ENCODE measurements at regions of chr3 and their contacts with region 1.

Region 1: DNA sequence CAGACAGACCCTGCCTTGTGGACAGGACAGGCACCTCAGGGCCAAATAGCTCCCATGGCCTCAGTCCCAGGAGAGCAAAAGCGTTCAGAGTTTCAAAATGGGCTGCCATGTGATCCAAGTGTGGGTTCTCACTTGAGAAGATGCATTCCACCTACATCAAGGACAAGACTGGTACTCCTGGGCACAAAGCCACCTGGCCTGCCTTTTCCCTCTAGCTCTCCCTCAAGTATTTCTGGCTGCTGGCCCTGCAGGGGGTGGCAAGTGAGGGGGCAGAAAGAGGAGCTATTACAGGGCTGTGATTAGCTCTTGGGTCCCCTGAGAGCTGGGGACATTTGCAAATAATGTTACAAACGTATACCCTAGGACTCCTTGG is 6.5 kb upstream of the COL7A1 start:
- DNase-seq: peak in 6 of 10 donors; percentile 31 to 84 (median 70)
- H3K4me3 ChIP-seq: no peak overlapping the region
- H3K27ac ChIP-seq: no peak overlapping the region
- H3K27me3 ChIP-seq: no peaks in the 10 kb centered on the region
- CTCF ChIP-seq: no peak

Region 2: DNA sequence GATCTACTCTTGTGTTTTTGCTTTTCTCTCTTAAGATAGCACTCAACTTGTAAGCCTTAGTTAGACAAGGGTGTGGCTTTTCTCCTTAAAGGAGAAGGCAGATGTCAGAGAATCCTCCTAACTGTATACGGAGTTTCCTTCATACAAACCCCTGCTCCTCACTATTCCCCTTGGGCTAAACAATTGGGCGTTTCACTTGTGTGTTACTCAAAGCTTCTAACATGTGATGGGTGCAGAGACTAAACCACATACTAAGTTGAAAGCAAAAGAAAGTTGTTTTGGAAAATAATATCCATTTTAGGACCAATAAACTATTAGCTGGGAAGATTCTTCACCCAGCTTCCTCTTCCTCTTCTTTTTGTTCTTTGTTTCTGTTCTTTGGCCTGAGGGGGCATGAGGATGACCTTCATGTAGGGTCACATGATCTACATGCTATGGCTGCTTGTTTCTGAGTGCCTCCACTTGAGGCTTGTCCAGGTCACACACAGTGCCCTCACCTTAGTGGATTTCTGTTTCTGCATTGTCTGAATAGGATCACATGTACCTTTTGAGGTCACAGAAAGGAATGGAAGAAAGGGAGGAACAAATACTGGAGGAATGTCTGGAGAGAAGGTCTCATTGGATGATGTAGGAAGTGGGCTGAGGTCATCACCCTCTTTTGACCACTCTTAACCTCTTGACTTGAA is 282.7 kb before region 1 on chr3:
- intact Hi-C with region 1: no loop called
- DNase-seq: no peak
- H3K4me3 ChIP-seq: no peak overlapping the region
- H3K27ac ChIP-seq: no peak overlapping the region
- H3K27me3 ChIP-seq: no peaks in the 10 kb centered on the region
- CTCF ChIP-seq: no peak

Region 3: DNA sequence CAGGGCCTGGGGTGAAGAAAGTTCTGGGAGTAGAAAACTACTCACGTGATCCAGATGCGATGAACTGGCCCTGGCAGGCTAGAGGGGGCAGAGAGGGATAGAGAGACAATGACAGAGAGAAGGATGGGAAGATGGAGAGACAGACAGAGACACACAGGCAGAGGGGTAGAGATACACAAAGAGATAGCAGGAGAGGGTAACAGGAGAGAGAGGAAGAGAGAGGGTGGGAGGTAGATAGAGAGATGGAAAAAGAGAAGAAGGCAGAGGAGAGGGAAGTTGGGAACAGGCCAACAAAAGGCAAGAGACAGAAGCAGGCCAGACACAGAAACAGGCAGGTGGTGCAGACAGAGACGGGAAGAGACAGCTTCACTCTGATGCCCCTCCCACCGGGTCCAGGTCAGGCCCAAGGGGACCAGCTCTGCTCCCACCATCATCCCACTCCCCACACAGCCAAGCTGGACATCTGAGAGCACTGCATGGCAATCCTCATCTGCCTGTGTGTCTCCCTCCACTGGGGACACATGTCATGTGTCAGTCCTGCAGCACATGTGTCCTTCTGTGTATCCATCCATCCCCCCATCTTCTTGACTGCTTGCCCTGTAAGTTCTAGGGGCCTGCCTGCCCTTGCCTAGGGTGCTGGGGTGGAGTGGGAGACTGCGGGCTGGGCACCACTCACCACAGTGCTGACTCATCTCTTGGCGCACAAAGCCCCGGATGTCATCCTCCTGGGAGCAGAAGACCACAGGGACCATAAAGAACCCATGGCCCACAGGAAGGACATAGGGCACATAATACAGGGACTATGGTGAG is 35.8 kb before region 1 on chr3:
- intact Hi-C with region 1: loop called (anchors 5 kb)
- DNase-seq: peak in 1 of 10 donors; percentile 51
- H3K4me3 ChIP-seq: no peak overlapping the region
- H3K27ac ChIP-seq: peak overlapping the region in 25 of 59 donors; percentile 4 to 88 (median 42)
- H3K27me3 ChIP-seq: no peaks in the 10 kb centered on the region
- CTCF ChIP-seq: no peak

Region 4: DNA sequence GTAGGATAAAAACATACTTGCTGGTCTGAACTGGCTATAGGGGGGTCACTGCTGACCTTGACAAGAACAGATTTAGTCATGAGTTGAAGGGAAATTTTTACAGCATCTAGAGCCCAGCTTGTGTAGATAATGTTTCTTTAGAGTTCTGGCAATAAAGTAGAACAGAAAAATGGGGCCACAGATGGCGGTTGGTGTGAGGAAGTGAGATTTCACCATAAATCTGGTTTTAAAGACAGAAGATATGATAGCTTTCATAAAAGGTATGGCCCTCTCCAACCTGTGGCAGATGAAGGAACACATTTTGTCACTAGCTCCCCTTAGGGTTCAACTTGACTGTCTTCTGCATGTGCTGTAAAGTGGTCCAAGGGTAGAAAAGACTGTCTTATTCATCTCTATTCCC is 451.9 kb after region 1 on chr3:
- intact Hi-C with region 1: no loop called
- DNase-seq: no peak
- H3K4me3 ChIP-seq: no peak overlapping the region
- H3K27ac ChIP-seq: peak overlapping the region in 4 of 59 donors; percentile 12 to 28 (median 20)
- H3K27me3 ChIP-seq: no peaks in the 10 kb centered on the region
- CTCF ChIP-seq: no peak